Activated CD8-positive, alpha-beta memory T cell treated with anti-CD3 and anti-CD28 coated beads, Interleukin-2, amount 10 ng/mL, durations not matched to agents 7 days and 5 days (primary cell): ENCODE measurements at regions of chr2 and their contacts with region 1.

Region 1: GRCh38 chr2:12948961-12949353 is 232.2 kb downstream of the TRIB2 start:
- DNase-seq: peak; percentile 79
- ATAC-seq: peak; percentile 82
- H3K4me3 Mint-ChIP-seq: no peak overlapping the region
- H3K27ac Mint-ChIP-seq: peak overlapping the region; percentile 75
- H3K4me1 Mint-ChIP-seq: peaks cover 25% of the 10 kb centered on the region
- H3K27me3 Mint-ChIP-seq: peaks cover 78% of the 10 kb centered on the region

Region 2: GRCh38 chr2:12606472-12607000 is 342.4 kb before region 1 on chr2:
- CTCF ChIA-PET with region 1: no interaction called
- DNase-seq: no peak
- ATAC-seq: no peak
- H3K4me3 Mint-ChIP-seq: no peak overlapping the region
- H3K27ac Mint-ChIP-seq: no peak overlapping the region
- H3K4me1 Mint-ChIP-seq: peaks cover 2% of the 10 kb centered on the region
- H3K27me3 Mint-ChIP-seq: no peaks in the 10 kb centered on the region

Region 3: DNA sequence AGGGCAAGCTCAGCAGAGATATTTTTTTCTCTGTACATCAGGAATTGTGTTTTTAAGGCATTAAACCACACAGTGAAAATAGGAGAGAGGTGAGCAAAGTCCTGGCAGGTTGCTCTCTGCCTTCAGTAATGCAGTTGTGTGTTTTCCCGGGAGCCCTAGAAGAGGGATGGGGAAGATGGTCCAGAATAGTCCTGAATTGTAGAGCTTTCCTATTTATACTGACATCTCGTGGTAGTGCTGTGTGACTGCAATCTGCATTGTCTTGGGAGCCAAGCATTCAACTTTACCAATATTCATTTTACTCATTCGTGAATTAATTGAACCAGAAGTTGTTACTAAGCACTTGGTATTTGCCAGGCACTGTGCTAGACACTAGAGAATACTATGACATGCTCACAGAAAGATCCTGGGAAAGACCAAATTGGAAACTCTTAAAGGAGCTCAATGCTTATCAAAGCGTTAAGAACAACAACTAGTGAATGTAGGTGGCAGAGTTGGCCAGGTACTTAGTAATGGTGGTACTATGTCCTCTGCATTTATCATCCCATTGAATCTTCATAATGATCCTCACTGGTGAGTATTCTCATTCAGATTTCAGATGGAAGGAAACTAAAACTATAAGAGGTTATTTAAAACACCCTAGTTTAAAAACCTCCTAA is 17.6 kb before region 1 on chr2:
- CTCF ChIA-PET with region 1: interaction called, 21 read pairs
- DNase-seq: no peak
- ATAC-seq: peak; percentile 55
- H3K4me3 Mint-ChIP-seq: no peak overlapping the region
- H3K27ac Mint-ChIP-seq: no peak overlapping the region
- H3K4me1 Mint-ChIP-seq: no peaks in the 10 kb centered on the region
- H3K27me3 Mint-ChIP-seq: peaks cover 39% of the 10 kb centered on the region

Region 4: DNA sequence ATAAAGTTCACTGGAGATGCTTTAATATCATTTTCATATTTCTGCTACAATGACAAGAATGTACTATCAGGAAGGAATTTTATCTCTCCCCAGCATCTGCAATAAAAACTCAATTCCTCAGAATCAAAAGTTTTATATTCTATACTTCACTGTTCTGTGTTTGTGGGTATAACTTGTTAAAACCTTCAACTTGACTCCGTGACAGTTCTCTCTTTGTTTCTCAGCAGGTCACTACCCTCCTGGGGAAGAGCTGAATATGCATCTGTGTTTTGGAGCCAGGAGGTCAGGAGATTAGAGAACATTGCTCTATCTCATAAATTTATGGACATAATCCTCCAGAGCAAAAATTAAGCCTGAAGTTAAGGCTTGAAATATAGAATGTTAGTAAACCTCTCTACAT is 179.2 kb after region 1 on chr2:
- CTCF ChIA-PET with region 1: no interaction called
- DNase-seq: no peak
- ATAC-seq: no peak
- H3K4me3 Mint-ChIP-seq: no peak overlapping the region
- H3K27ac Mint-ChIP-seq: no peak overlapping the region
- H3K4me1 Mint-ChIP-seq: no peaks in the 10 kb centered on the region
- H3K27me3 Mint-ChIP-seq: no peaks in the 10 kb centered on the region